ENCODE measurements at regions of chr18 and their contacts with region 1.

Region 1: DNA sequence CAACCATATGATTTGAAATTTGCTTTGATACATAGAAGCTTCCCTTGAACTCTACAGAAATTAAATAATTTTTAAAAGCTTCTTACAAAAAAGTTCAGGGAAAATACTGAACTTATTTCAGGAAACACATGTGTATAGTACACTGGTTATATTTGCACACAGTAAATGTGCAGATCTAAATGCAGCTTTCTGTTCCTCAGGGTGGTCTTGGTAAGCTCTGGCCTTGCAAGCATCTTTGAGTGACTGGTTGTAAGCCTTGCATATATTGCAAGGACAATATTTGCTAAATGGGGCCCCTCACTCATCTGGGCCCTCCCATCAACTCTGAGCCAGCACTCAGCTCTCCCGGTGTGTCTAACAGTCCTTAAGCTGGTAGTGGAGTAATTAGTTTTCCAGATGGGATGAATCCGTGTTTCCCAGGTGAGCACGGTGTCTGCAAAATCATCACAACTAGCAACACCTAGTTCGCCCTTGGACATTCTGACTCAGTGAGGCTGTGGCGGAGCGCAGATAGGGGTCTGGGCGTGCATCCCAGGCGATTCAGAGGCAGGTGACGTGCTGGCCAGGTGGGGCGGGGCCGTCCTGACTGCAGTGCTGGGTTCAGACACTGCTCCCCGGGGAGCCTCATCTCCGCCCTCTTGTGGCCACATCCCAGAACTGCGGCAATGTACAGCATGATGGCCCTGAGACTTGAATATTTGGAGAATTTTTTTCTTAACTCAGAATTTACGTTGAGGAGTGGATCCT is 149.6 kb downstream of the MBP start:
- DNase-seq: peak; percentile 84
- ATAC-seq: peak; percentile 82 to 91

Region 2: DNA sequence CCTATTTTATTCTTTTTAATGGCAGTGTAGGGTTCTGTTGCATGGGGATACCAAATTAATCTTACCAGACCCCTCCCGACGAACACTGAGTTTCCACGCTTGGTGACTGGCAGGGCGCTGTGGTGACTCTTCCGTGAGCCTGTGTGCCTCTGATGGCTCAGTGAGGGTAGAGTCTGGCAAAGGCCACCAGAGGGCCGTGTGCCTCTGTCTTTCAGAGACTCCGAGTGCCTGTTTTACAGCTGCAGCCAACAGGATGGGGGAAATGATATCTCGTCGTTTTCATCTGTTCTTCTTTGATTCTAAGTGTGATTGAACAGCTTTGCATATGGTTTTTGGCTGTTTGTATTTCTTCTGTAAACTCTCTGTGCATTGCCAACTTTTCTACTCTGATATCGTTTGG is 60.9 kb before region 1 on chr18:
- intact Hi-C with region 1: loop called in 1 of 2 experiments (anchors 5 kb)
- DNase-seq: peak; percentile 55
- ATAC-seq: peak; percentile 83 to 93

Region 3: DNA sequence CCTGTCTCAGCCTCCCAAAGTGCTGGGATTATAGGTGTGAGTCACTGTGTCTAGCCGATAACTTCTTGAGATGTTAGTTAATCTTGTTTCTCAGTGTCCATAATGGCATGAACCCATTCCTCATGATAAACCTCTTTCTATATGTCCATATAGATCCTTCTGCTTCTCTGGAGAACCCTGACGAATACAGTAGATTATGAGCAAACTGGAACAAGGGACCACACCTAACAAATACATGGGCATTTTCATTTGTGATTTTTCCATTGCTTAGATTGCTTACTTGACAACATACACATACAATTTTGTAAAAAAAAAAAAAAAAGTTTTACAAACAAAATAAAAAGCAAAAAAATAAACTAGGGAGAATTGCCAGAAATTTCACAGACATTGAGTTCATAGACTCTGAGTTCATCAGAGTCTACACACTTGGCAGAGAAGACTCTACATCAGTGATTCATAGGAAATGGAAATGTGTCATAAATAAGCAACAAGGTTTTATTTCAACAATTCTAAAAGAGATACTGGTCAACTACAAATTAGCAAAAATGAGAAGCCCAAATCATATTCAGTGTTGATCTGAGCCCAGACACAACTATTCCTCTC is 363.3 kb after region 1 on chr18:
- intact Hi-C with region 1: no loop called
- DNase-seq: no peak
- ATAC-seq: peak in 1 of 2 donors; percentile 84